Natural killer cell (primary cell): ENCODE measurements at regions of chr10 and their contacts with region 1.

Region 1: DNA sequence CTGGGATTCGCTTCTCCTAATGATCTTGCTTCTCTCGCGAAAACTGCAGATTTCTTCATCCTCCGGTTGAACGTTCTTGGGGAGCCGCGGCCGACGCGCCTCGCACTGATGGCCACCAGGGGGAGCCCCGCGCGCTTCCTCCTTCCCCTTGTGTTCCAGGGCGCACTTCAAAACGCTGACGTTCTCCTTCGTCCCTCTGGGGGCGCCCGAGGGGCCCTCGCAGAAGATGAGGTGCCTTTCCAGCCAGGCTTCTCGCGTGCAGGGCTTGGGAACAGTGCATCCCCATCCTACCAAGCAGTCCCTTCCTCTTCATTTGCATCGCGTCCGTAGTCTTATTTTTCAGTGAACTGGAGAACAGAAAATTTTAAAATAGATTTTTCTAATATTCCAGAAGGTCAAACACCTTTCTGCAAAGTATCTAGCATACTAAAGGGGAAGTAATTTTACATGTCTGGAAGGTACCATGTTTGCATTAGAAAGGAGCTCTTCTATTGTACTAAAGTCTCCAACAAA is 22.5 kb downstream of the GSTO2 start:
- DNase-seq: peak; percentile 87 to 95
- ATAC-seq: peak; percentile 100
- H3K4me3 ChIP-seq: no peak overlapping the region
- H3K4me3 Mint-ChIP-seq: peak overlapping the region; percentile 21
- H3K27ac ChIP-seq: no peak overlapping the region
- H3K27ac Mint-ChIP-seq: no peak overlapping the region
- H3K4me1 ChIP-seq: peaks cover 7% of the 10 kb centered on the region
- H3K4me1 Mint-ChIP-seq: peaks cover 7 to 8% of the 10 kb centered on the region in 2 donors
- H3K27me3 ChIP-seq: peaks cover 3% of the 10 kb centered on the region
- H3K27me3 Mint-ChIP-seq: peaks cover 23 to 25% of the 10 kb centered on the region in 2 donors
- CTCF ChIP-seq: peak; percentile 100

Region 2: GRCh38 chr10:103888113-103888841 is 403.2 kb before region 1 on chr10:
- intact Hi-C with region 1: no loop called
- DNase-seq: peak in 1 of 2 donors; percentile 77
- ATAC-seq: peak; percentile 82 to 95 (median 82)
- H3K4me3 ChIP-seq: no peak overlapping the region
- H3K4me3 Mint-ChIP-seq: no peak overlapping the region
- H3K27ac ChIP-seq: no peak overlapping the region
- H3K27ac Mint-ChIP-seq: peak overlapping the region; percentile 5 to 53
- H3K4me1 ChIP-seq: no peaks in the 10 kb centered on the region
- H3K4me1 Mint-ChIP-seq: peaks cover 12 to 14% of the 10 kb centered on the region in 2 donors
- H3K27me3 ChIP-seq: no peaks in the 10 kb centered on the region
- H3K27me3 Mint-ChIP-seq: no peaks in the 10 kb centered on the region
- CTCF ChIP-seq: peak; percentile 72

Region 3: GRCh38 chr10:104350127-104350635 is 58.7 kb after region 1 on chr10:
- intact Hi-C with region 1: loop called (anchors 1 kb)
- DNase-seq: peak in 1 of 2 donors; percentile 84
- ATAC-seq: peak; percentile 68 to 72 (median 71)
- H3K4me3 ChIP-seq: no peak overlapping the region
- H3K4me3 Mint-ChIP-seq: no peak overlapping the region
- H3K27ac ChIP-seq: peak overlapping the region; percentile 47
- H3K27ac Mint-ChIP-seq: no peak overlapping the region
- H3K4me1 ChIP-seq: peaks cover 41% of the 10 kb centered on the region
- H3K4me1 Mint-ChIP-seq: peaks cover 16 to 29% of the 10 kb centered on the region in 2 donors
- H3K27me3 ChIP-seq: no peaks in the 10 kb centered on the region
- H3K27me3 Mint-ChIP-seq: no peaks in the 10 kb centered on the region
- CTCF ChIP-seq: peak; percentile 73